Posterior vena cava (tissue), 2 donors: ENCODE measurements at regions of chr22 and their contacts with region 1.

Region 1: GRCh38 chr22:20507253-20508066 is at the start of gene MED15:
- DNase-seq: peak; percentile 97
- total RNA-seq, gene MED15: 75.9 to 80.5 TPM

Region 2: DNA sequence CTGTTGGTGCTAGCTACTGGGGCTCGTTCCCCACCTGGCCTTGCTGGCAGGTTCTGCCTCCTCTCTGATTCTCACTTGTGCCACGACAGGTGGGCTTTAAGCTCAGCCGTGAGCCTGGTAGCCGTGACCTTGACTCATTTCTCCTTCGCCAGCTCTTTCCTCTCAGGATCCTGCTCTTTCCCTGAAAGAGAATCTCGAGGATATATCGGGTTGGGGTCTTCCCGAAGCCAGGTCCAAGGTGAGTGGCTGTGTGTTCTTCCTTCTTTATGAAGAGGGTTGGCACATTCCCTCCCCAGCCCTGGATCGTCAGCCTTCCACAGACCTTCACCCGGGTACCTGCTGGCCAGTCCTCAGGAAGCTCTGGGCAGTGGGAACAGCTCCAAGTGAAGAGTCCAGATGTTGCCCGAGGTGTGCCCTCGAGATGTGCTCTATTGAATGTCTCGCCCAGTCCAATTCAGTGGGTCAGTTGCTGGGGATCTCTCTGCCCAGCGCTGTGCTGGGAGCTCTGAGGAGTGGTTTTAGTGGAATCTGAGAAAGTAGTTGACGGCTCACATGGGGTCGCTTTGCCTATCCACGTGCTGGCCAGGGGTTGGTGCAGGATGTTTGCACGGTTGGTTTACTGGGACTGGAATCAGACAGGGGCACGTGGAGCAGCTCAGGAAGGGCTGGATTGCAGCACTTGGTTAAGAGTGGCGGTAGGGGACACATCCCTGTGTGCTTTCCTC is 112.1 kb before region 1 on chr22:
- intact Hi-C with region 1: loop called in 1 of 2 experiments (anchors 1 kb)
- DNase-seq: no peak

Region 3: GRCh38 chr22:20550821-20551744 is 43.6 kb after region 1 on chr22:
- intact Hi-C with region 1: loop called in 1 of 2 experiments (anchors 5 kb)
- DNase-seq: peak; percentile 88

Region 4: GRCh38 chr22:22207845-22208564 is 1700.5 kb after region 1 on chr22:
- intact Hi-C with region 1: loop called in 1 of 2 experiments (anchors 10 kb)
- DNase-seq: peak; percentile 87